Activated CD4-positive, alpha-beta T cell treated with anti-CD3 and anti-CD28 coated beads, Interleukin-2, amount 10 ng/mL, durations not matched to agents 24 days and 14 days (primary cell): ENCODE measurements at regions of chr19 and their contacts with region 1.

Region 1: DNA sequence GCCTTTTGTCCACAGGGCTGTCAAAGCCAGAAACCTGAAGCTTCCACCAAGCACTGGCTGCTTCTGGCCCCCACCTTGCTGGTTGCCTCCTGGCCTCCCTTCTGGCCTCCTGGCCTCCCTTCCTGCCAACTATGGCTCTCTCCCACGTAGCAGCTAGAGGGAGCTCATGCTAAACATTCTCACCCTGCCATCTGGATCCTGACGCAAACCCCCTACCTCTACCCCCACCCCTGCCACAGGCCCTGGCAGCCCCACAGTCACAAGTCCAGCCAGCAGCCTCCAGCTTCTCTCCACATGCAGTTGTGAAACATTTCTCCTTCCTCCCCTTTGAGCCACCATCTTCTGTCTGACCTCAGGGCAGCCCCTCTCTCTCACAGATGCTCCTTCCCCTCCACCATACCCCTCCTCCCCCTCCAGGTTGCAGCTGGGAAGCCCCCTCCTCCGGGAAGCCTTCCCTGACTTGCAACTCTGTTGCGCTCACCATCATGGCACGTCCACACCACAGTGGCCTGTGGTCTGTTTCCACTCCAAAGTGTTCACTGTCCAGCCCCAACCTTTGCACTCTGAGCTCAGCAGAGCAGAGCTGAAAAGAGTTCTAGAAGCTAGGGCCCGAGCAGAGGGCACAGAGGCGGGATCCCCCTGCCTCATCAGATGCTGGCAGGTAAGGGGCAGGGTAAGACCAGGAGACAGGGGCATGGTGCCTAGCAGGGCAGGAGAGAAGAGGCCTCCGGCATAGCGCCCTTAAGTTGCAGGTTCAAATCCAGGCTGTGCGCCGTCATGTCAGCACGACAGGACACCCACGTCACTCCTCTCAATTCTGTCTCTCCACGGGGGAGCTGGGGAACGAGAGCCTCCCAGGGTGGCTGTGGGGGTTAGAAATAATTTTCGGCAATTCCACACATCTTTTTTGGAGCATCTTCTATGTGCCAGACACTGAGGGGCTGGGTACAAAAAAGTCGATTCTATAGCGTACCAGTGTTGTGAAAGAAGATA is 7.3 kb downstream of the ADGRL1 start:
- DNase-seq: no peak
- H3K4me3 Mint-ChIP-seq: no peak overlapping the region
- H3K27ac Mint-ChIP-seq: no peak overlapping the region
- H3K4me1 Mint-ChIP-seq: peaks cover 17% of the 10 kb centered on the region
- H3K27me3 Mint-ChIP-seq: peaks cover 6% of the 10 kb centered on the region

Region 2: DNA sequence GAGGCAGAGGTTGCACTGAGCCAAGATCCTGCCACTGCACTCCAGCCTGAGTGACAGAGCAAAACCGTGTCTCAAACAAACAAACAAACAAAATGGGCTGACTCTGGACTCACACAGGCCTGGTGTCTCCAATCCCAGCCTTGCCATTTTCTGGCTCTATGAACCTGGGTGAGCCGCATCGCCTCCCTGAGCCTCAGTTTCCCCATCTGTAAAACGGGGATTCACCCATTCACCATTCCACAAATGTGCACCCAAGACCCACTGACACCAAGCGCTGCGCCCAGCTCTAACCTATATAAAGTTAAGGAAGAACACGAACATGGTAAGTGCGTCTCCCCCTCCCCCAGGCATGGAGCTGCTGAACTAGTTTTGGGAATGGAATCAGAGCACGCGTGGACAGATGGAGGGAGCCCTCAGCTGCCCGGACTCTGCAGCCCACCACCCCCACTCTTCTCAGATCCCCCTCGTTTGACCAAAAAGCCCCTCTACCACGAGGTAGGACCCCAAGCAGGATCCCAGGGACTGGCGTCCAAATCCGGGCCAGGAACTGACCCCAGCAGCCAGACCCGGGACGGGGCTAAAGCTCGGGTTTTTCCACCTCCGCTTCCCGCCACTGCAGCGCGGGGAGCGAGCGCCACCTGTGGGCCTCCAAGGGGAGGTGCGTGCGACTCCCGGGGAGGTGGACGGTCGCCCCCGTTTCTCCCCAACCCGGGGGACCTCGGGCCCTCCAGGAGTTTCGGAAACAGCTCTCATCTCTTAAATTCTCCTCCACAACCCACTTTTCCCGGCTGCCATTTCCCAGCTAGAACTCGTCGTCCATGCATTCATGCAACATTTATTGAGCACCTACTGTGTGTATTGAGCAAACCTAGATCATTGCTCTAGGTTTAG is 149.6 kb after region 1 on chr19:
- intact Hi-C with region 1: loop called (anchors 1 kb)
- DNase-seq: peak; percentile 91
- H3K4me3 Mint-ChIP-seq: peak overlapping the region; percentile 74
- H3K27ac Mint-ChIP-seq: peak overlapping the region; percentile 72
- H3K4me1 Mint-ChIP-seq: peaks cover 17% of the 10 kb centered on the region
- H3K27me3 Mint-ChIP-seq: no peaks in the 10 kb centered on the region